K562 (cell line): ENCODE measurements at regions of chr7 and their contacts with region 1.

Region 1: DNA sequence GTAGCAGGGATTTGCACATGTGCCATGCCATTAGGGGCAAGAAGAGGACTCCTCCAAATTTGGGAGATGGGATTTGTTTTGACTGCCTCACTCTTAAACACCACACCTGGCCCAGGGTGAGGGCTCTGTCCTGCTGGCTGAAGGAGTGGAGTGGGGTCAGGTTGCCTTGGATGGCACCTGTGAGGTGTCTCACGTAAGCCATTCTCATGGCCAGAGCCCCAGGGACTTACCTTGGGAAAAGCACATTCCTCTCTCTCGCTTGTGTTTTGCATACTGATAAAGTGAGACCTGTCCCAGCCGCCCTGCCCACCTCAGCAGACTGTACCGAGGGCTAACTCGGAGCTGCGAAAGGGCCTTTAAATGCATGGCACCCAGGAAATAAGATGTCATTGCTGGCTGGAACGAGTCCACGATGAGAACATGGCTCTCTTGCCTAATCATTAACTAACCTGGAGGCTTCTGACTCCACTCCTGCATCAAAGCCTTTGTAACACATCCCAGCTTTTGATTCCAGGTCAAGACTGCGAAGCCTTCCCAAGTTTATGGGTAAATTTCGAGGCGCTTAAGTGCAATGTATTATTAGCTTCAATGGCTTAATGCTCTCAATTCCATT is 184.0 kb upstream of the RNF32 start:
- DNase-seq: no peak
- ATAC-seq: no peak
- H3K4me3 ChIP-seq: no peak overlapping the region
- H3K27ac ChIP-seq: no peak overlapping the region
- H3K4me1 ChIP-seq: no peaks in the 10 kb centered on the region
- H3K27me3 ChIP-seq: peaks cover 60 to 79% of the 10 kb centered on the region in 2 experiments
- CTCF ChIP-seq: no peak
- EP300 ChIP-seq: no peak
- POLR2A ChIP-seq: no peak
- RAD21 ChIP-seq: no peak

Region 2: GRCh38 chr7:156074982-156075615 is 381.5 kb before region 1 on chr7:
- CTCF ChIA-PET with region 1: no interaction called
- POLR2A ChIA-PET with region 1: no interaction called
- in situ Hi-C with region 1: loop called (anchors 10 kb)
- intact Hi-C with region 1: no loop called
- DNase-seq: peak; percentile 58 to 71 (median 69)
- ATAC-seq: peak; percentile 97
- H3K4me3 ChIP-seq: peak overlapping the region; percentile 44
- H3K27ac ChIP-seq: no peak overlapping the region; the same call in 2 of the 3 replicates
- H3K4me1 ChIP-seq: peaks cover 0 to 6% of the 10 kb centered on the region in 2 experiments; a peak in 2 of 5 replicates
- H3K27me3 ChIP-seq: peaks cover 20 to 66% of the 10 kb centered on the region in 2 experiments; a peak in 4 of 5 replicates
- CTCF ChIP-seq: peak; percentile 66 to 86 (median 72)
- EP300 ChIP-seq: no peak
- POLR2A ChIP-seq: no peak
- RAD21 ChIP-seq: peak in 1 of 2 experiments; percentile 42; a peak in 2 of 4 replicates

Region 3: GRCh38 chr7:156480671-156481070 is 24.1 kb after region 1 on chr7:
- CTCF ChIA-PET with region 1: no interaction called
- POLR2A ChIA-PET with region 1: no interaction called
- in situ Hi-C with region 1: no loop called
- intact Hi-C with region 1: no loop called
- DNase-seq: no peak
- ATAC-seq: no peak
- H3K4me3 ChIP-seq: no peak overlapping the region
- H3K27ac ChIP-seq: no peak overlapping the region
- H3K4me1 ChIP-seq: peaks cover 0 to 6% of the 10 kb centered on the region in 2 experiments; a peak in 1 of 5 replicates
- H3K27me3 ChIP-seq: peaks cover 20 to 41% of the 10 kb centered on the region in 2 experiments; a peak in 4 of 5 replicates
- CTCF ChIP-seq: no peak
- EP300 ChIP-seq: no peak
- POLR2A ChIP-seq: no peak
- RAD21 ChIP-seq: no peak

Region 4: GRCh38 chr7:156650042-156650441 is 193.4 kb after region 1 on chr7:
- CTCF ChIA-PET with region 1: no interaction called
- POLR2A ChIA-PET with region 1: no interaction called
- in situ Hi-C with region 1: no loop called
- intact Hi-C with region 1: no loop called
- DNase-seq: peak; percentile 73 to 79 (median 75)
- ATAC-seq: peak; percentile 98
- H3K4me3 ChIP-seq: no peak overlapping the region
- H3K27ac ChIP-seq: no peak overlapping the region
- H3K4me1 ChIP-seq: peaks cover 0 to 3% of the 10 kb centered on the region in 2 experiments; a peak in 1 of 5 replicates
- H3K27me3 ChIP-seq: no peaks in the 10 kb centered on the region
- CTCF ChIP-seq: peak; percentile 84 to 91 (median 88)
- EP300 ChIP-seq: no peak
- POLR2A ChIP-seq: no peak
- RAD21 ChIP-seq: peak in 1 of 2 experiments; percentile 74; a peak in 3 of 4 replicates